ENCODE measurements at regions of chr17 and their contacts with region 1.

Region 1: DNA sequence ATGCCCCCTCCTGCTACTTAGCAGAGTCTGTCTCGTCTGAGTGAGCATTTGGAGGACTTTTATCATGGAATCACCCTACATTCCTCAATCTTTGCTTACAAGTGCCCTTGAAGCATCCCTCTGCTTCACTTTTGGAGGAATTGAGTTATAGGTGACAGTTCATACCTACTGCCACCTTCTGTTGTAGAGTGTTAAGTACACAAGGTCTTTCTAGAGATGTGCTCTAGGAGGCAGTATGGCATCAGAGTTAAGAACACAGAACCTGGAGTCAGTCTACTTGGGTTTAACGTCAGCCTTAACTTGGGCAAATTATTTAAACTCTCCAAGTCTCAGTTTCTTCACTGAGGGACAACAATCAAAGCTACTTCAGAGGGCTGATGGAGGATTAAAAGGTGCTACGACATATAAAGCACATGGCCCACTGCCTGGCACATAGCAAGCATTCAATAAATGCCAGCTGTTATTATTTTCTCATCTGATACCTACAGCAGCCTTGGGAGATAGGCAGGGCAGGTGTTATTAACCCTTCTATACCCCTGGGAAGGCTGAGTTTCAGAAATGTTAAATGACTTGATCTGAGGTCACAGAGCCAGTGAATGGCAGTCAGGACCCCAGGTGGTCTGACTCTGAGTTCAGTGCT is 62.2 kb downstream of the UTP18 start:
- DNase-seq: no peak
- H3K4me3 Mint-ChIP-seq: no peak overlapping the region
- H3K27ac Mint-ChIP-seq: no peak overlapping the region
- H3K4me1 Mint-ChIP-seq: no peaks in the 10 kb centered on the region
- H3K27me3 Mint-ChIP-seq: peaks cover 22% of the 10 kb centered on the region

Region 2: GRCh38 chr17:51355441-51356410 is 33.2 kb after region 1 on chr17:
- CTCF ChIA-PET with region 1: no interaction called
- DNase-seq: no peak
- H3K4me3 Mint-ChIP-seq: no peak overlapping the region
- H3K27ac Mint-ChIP-seq: no peak overlapping the region
- H3K4me1 Mint-ChIP-seq: no peaks in the 10 kb centered on the region
- H3K27me3 Mint-ChIP-seq: peaks cover 42% of the 10 kb centered on the region

Region 3: GRCh38 chr17:51378059-51378458 is 55.5 kb after region 1 on chr17:
- CTCF ChIA-PET with region 1: no interaction called
- DNase-seq: no peak
- H3K4me3 Mint-ChIP-seq: no peak overlapping the region
- H3K27ac Mint-ChIP-seq: no peak overlapping the region
- H3K4me1 Mint-ChIP-seq: peaks cover 2% of the 10 kb centered on the region
- H3K27me3 Mint-ChIP-seq: peaks cover 11% of the 10 kb centered on the region

Region 4: GRCh38 chr17:51540151-51540550 is 217.6 kb after region 1 on chr17:
- CTCF ChIA-PET with region 1: interaction called, 10 read pairs
- DNase-seq: peak; percentile 29
- H3K4me3 Mint-ChIP-seq: no peak overlapping the region
- H3K27ac Mint-ChIP-seq: peak overlapping the region; percentile 29
- H3K4me1 Mint-ChIP-seq: peaks cover 17% of the 10 kb centered on the region
- H3K27me3 Mint-ChIP-seq: no peaks in the 10 kb centered on the region

Region 5: GRCh38 chr17:51555153-51555552 is 232.6 kb after region 1 on chr17:
- CTCF ChIA-PET with region 1: no interaction called
- DNase-seq: no peak
- H3K4me3 Mint-ChIP-seq: no peak overlapping the region
- H3K27ac Mint-ChIP-seq: no peak overlapping the region
- H3K4me1 Mint-ChIP-seq: no peaks in the 10 kb centered on the region
- H3K27me3 Mint-ChIP-seq: peaks cover 10% of the 10 kb centered on the region

Measured in activated naive CD4-positive, alpha-beta T cell treated with anti-CD3 and anti-CD28 coated beads, Interleukin-2, amount 10 ng/mL, durations not matched to agents 7 days and 5 days (primary cell).